CD4-positive, alpha-beta memory T cell (primary cell): ENCODE measurements at regions of chr12 and their contacts with region 1.

Region 1: DNA sequence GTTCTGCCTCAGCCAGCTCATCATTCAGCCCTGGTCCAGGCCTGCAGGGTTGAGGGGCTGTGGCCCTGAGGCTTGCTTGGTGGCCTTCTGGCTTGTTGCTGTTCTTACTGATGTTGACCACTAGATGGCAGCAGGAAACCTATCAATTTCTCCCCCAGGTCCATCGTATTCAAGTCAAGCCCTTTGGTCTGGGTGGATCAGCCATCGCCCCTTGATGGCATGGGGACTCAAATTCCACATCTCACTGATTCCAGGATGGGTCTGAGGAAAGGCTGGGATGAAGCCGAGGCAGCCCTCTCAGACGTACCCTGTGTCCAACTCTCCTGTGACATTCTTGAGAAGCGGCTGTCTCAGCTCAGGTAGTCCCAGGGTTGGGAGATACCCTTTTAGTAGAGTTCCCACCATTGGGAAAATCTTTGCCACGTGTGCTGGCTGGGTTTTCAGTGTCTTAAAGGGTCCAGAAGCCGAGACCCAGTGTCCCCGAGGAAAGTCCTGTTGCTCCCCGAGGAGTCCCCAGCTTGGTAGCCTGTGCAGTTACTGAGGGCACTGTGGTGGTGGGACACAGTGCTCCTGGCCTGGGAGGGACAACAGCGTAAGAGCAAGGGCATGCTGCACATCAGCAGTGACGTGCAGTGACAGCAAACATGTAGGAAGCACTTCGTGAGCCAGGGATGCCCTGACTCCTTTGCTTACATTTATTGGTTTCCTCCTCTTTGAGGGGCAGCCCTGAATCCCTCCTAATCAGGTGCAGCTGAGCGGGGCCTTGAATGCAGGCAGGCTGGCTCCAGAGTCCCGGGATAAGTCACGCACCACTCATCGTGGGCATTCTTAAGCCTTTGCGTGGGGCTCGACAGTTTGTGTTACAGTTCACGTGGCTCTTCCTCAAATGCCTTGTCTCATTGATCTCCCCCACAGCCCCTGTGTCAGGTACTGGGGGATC is 58.6 kb downstream of the TSPAN9 start:
- DNase-seq: peak in 4 of 5 donors; percentile 29 to 46 (median 45)
- H3K4me3 ChIP-seq: no peak overlapping the region
- H3K4me3 Mint-ChIP-seq: no peak overlapping the region
- H3K27ac ChIP-seq: no peak overlapping the region
- H3K27ac Mint-ChIP-seq: no peak overlapping the region
- H3K4me1 ChIP-seq: no peaks in the 10 kb centered on the region
- H3K4me1 Mint-ChIP-seq: peaks cover 0 to 4% (median under 1%) of the 10 kb centered on the region in 4 donors
- H3K27me3 ChIP-seq: no peaks in the 10 kb centered on the region
- H3K27me3 Mint-ChIP-seq: peaks cover 17 to 23% of the 10 kb centered on the region in 2 donors

Region 2: DNA sequence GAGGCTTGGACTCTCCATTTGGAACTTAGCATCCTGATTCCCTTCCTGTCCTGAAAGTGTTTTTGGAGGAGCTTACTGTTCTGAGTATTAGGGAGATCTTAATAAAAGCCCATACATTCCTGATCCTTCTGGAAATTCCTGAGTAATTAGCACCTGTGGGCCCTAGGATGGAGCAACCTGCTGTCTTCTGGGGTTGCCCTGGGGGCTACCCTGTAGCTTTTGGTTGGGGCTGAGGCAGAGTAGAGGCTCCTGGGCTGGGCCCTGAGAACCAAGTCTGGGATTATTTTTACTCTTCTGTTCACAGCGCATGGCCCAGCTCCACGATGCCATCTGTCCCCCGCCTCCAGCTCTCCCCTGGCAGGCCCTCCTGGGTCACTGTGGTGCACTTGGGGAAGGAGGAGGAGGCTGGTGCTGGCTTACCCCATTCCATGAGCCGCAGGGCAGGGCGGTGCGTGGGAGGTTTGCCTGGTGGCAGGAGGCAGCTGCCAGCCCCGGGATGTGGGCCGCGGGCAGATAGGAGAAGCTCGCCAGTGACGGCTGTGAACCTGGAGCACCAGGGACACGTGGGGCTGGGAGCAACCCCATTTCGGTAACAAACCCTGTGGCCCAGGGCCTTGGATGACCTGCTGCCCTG is 153.5 kb before region 1 on chr12:
- CTCF ChIA-PET with region 1: no interaction called
- POLR2A ChIA-PET with region 1: no interaction called
- intact Hi-C with region 1: no loop called
- DNase-seq: no peak
- H3K4me3 ChIP-seq: no peak overlapping the region
- H3K4me3 Mint-ChIP-seq: no peak overlapping the region
- H3K27ac ChIP-seq: no peak overlapping the region
- H3K27ac Mint-ChIP-seq: no peak overlapping the region
- H3K4me1 ChIP-seq: no peaks in the 10 kb centered on the region
- H3K4me1 Mint-ChIP-seq: peaks cover 0 to 7% (median under 1%) of the 10 kb centered on the region in 4 donors
- H3K27me3 ChIP-seq: no peaks in the 10 kb centered on the region
- H3K27me3 Mint-ChIP-seq: peaks cover 1 to 3% of the 10 kb centered on the region in 2 donors

Region 3: GRCh38 chr12:3148366-3149000 is 12.7 kb after region 1 on chr12:
- CTCF ChIA-PET with region 1: interaction called, 10 read pairs
- POLR2A ChIA-PET with region 1: no interaction called
- intact Hi-C with region 1: no loop called
- DNase-seq: no peak
- H3K4me3 ChIP-seq: no peak overlapping the region
- H3K4me3 Mint-ChIP-seq: no peak overlapping the region
- H3K27ac ChIP-seq: no peak overlapping the region
- H3K27ac Mint-ChIP-seq: no peak overlapping the region
- H3K4me1 ChIP-seq: no peaks in the 10 kb centered on the region
- H3K4me1 Mint-ChIP-seq: no peaks in the 10 kb centered on the region
- H3K27me3 ChIP-seq: no peaks in the 10 kb centered on the region
- H3K27me3 Mint-ChIP-seq: peaks cover 9 to 22% of the 10 kb centered on the region in 2 donors

Region 4: GRCh38 chr12:3168223-3169221 is 32.7 kb after region 1 on chr12:
- CTCF ChIA-PET with region 1: no interaction called
- POLR2A ChIA-PET with region 1: no interaction called
- intact Hi-C with region 1: no loop called
- DNase-seq: no peak
- H3K4me3 ChIP-seq: no peak overlapping the region
- H3K4me3 Mint-ChIP-seq: no peak overlapping the region
- H3K27ac ChIP-seq: no peak overlapping the region
- H3K27ac Mint-ChIP-seq: no peak overlapping the region
- H3K4me1 ChIP-seq: no peaks in the 10 kb centered on the region
- H3K4me1 Mint-ChIP-seq: peaks cover 0 to 2% (median 0%) of the 10 kb centered on the region in 4 donors
- H3K27me3 ChIP-seq: no peaks in the 10 kb centered on the region
- H3K27me3 Mint-ChIP-seq: peaks cover 0 to 17% of the 10 kb centered on the region in 2 donors

Region 5: DNA sequence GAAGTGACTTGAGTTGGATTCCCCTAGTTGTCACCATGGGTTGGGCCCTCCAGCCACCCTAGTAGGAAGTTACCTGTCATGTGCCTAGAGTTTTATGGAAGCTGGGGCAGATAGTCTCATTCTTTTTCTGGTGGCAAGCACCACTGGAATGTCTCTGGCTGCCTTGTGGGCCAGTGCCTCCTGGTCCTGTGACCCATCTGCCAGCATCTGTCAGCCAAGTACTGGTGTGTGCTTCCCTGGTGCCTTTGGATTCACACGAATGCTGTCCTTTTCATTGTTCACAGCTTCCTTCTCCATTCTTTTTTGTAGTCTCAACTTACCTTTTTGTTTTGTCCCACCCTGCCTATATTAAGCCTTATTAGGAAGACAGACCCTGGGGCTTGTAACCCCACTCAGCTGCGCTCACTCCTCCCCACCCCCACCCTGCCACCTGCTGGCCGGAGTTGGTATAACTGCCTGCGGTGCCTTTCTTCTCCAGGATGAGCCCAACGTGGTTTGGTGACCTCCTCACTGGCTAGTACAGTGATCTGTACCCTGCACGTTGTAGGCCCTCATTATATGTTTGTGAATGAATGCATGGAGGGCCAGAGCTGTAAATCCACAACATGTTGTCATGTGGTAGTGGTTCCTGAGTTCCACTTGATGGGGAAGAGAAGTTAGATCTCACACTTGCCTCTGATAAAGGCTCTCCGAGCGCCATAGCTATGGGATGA is 67.1 kb after region 1 on chr12:
- CTCF ChIA-PET with region 1: interaction called, 5 read pairs
- POLR2A ChIA-PET with region 1: no interaction called
- intact Hi-C with region 1: loop called (anchors 2 kb)
- DNase-seq: peak in 4 of 5 donors; percentile 11 to 29 (median 18)
- H3K4me3 ChIP-seq: no peak overlapping the region
- H3K4me3 Mint-ChIP-seq: peak overlapping the region in 1 of 8 donors; percentile 61
- H3K27ac ChIP-seq: no peak overlapping the region
- H3K27ac Mint-ChIP-seq: peak overlapping the region in 1 of 7 donors; percentile 21
- H3K4me1 ChIP-seq: no peaks in the 10 kb centered on the region
- H3K4me1 Mint-ChIP-seq: peaks cover 4 to 19% (median 5%) of the 10 kb centered on the region in 4 donors
- H3K27me3 ChIP-seq: peaks cover 8% of the 10 kb centered on the region
- H3K27me3 Mint-ChIP-seq: peaks cover 29 to 30% of the 10 kb centered on the region in 2 donors

Region 6: GRCh38 chr12:3275171-3276041 is 139.6 kb after region 1 on chr12:
- CTCF ChIA-PET with region 1: interaction called, 20 read pairs
- POLR2A ChIA-PET with region 1: no interaction called
- intact Hi-C with region 1: no loop called
- DNase-seq: peak in 4 of 5 donors; percentile 46 to 58 (median 52)
- H3K4me3 ChIP-seq: no peak overlapping the region
- H3K4me3 Mint-ChIP-seq: peak overlapping the region in 2 of 8 donors; percentile 25 to 46
- H3K27ac ChIP-seq: no peak overlapping the region
- H3K27ac Mint-ChIP-seq: no peak overlapping the region
- H3K4me1 ChIP-seq: no peaks in the 10 kb centered on the region
- H3K4me1 Mint-ChIP-seq: no peaks in the 10 kb centered on the region
- H3K27me3 ChIP-seq: no peaks in the 10 kb centered on the region
- H3K27me3 Mint-ChIP-seq: peaks cover 8 to 20% of the 10 kb centered on the region in 2 donors